Heart right ventricle (tissue), 16 donors: ENCODE measurements at regions of chr3 and their contacts with region 1.

Region 1: GRCh38 chr3:4741404-4742307 is 237.6 kb upstream of the BHLHE40 start:
- DNase-seq: peak; percentile 41 to 87
- ATAC-seq: peak; percentile 80 to 92 (median 86)
- H3K4me3 ChIP-seq: no peak overlapping the region
- H3K27ac ChIP-seq: peak overlapping the region; percentile 61 to 97 (median 87)
- H3K4me1 ChIP-seq: peaks cover 10 to 93% (median 47%) of the 10 kb centered on the region in 9 donors
- H3K27me3 ChIP-seq: no peaks in the 10 kb centered on the region
- CTCF ChIP-seq: no peak

Region 2: GRCh38 chr3:4814305-4814903 is 72.7 kb after region 1 on chr3:
- intact Hi-C with region 1: no loop called
- DNase-seq: peak in 1 of 2 donors; percentile 31
- ATAC-seq: peak; percentile 69 to 89 (median 84)
- H3K4me3 ChIP-seq: peak overlapping the region in 1 of 10 donors; percentile 10
- H3K27ac ChIP-seq: peak overlapping the region in 7 of 10 donors; percentile 6 to 79 (median 40)
- H3K4me1 ChIP-seq: peaks cover 0 to 17% (median 0%) of the 10 kb centered on the region in 9 donors
- H3K27me3 ChIP-seq: no peaks in the 10 kb centered on the region
- CTCF ChIP-seq: no peak

Region 3: DNA sequence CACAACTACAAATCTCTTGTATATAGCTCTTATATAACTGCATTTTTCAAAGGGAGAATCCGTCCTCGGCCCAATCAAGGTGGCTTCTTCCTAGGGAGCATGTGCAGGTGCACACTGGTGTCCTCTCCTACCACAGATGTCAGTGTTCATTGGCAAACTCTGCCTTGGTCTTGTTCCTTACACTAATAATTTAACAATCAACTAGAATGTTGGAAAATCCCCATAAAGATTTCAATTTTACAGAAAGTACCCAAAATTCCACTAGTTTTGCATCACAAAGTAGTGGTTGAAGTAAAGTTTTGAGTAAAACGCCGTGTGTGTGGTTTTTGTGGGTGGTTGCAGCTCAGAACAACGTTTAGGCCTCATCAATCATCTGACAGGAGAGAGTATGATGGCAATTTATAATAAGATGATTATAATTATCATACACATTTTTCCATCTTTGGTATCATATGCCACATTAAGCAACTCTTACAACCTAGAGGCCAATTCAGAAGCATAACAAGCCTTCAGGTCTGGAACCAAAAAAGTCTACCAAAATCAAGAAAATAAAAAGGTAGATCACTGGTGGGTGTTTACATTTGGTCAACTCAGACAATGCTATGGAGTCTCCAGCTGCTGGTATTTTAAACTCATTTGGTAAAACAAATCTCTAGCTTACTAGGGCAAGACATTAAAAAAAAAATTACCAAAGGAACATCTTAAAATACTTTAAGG is 108.7 kb after region 1 on chr3:
- intact Hi-C with region 1: loop called in 1 of 10 experiments (anchors 10 kb)
- DNase-seq: no peak
- ATAC-seq: no peak
- H3K4me3 ChIP-seq: no peak overlapping the region
- H3K27ac ChIP-seq: peak overlapping the region in 1 of 10 donors; percentile 62
- H3K4me1 ChIP-seq: peaks cover 0 to 54% (median 6%) of the 10 kb centered on the region in 9 donors
- H3K27me3 ChIP-seq: no peaks in the 10 kb centered on the region
- CTCF ChIP-seq: no peak

Region 4: DNA sequence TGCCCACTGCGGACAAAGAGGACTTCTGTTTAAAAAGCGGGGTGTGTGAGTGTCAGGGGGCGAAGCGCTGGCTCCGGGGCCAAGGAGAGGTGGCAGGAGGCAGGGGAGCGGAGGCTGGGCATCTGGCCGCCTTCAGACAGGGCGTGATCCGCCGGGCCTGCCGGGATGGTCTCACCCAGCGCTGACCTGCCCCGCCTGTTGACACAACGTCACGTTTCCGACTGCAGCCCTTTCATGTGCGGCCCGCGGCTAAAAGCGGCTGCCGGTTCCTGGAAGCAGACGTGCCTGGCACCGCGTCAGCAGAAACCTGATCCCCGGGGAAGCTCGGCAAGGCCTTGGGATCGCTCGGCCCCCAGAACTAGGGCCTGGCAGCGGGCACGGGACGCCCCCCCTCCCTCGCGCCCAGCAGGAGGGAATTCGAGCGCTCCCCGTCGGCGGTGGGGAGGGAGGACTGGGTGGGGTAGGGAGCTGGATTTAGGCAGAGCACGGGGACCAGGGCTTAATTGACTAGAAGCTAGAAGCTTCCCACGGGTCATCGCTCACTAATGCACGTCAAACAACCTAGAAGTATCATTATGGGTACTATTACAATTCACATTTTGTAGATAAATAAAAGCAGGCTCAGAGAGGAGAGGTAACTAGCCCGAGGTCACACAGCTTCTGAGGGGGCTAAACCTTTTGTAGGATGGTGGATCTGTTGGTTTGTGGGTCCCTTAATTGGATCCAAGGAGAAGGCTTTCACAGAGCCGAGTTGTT is 245.3 kb after region 1 on chr3:
- intact Hi-C with region 1: loop called in 2 of 10 experiments (anchors 5 kb)
- DNase-seq: peak; percentile 97 to 98
- ATAC-seq: peak; percentile 85 to 95 (median 90)
- H3K4me3 ChIP-seq: peak overlapping the region in 9 of 10 donors; percentile 22 to 98 (median 73)
- H3K27ac ChIP-seq: peak overlapping the region; percentile 92 to 100 (median 100)
- H3K4me1 ChIP-seq: peaks cover 24 to 87% (median 73%) of the 10 kb centered on the region in 9 donors
- H3K27me3 ChIP-seq: no peaks in the 10 kb centered on the region
- CTCF ChIP-seq: peak in 5 of 9 donors; percentile 10 to 35 (median 28)